HEK293 (cell line): ENCODE measurements at regions of chr5 and their contacts with region 1.

Region 1: GRCh38 chr5:169980418-169981053 is at the start of gene INSYN2B:
- H3K4me3 ChIP-seq: peak within 1 kb of the TSS; percentile 27
- H3K27ac ChIP-seq: no peak within 1 kb of the TSS
- H3K4me1 ChIP-seq: no peaks in the 10 kb centered on the region
- CTCF ChIP-seq: peak; percentile 81

Region 2: GRCh38 chr5:169842699-169843098 is 137.8 kb before region 1 on chr5:
- CTCF ChIA-PET with region 1: no interaction called
- POLR2A ChIA-PET with region 1: no interaction called
- H3K4me3 ChIP-seq: no peak overlapping the region
- H3K27ac ChIP-seq: no peak overlapping the region
- H3K4me1 ChIP-seq: no peaks in the 10 kb centered on the region
- CTCF ChIP-seq: no peak

Region 3: GRCh38 chr5:169945831-169946261 is 34.7 kb before region 1 on chr5:
- CTCF ChIA-PET with region 1: interaction called, 10 read pairs
- POLR2A ChIA-PET with region 1: no interaction called
- H3K4me3 ChIP-seq: no peak overlapping the region
- H3K27ac ChIP-seq: no peak overlapping the region
- H3K4me1 ChIP-seq: no peaks in the 10 kb centered on the region
- CTCF ChIP-seq: no peak

Region 4: DNA sequence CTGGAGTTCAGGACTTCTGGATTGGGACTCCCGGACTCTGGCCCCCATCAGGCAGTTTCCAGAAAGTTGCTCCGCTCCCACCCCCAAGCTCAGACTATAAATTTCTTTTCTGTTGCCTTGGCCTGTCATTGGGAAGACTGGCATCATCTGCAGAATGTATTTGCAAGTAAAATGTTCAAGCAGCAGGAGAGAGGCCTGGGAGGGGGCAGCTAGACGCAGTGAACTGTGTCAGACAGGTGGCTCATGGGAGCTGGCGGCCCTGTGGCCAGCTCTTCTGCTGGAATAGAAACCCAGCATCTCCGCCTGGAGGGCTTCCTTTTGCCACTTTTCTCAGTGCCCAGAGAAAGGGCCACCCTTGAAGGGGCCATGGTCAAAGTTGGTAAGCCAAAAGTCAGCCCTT is 16.3 kb before region 1 on chr5:
- CTCF ChIA-PET with region 1: interaction called, 59 read pairs
- POLR2A ChIA-PET with region 1: no interaction called
- H3K4me3 ChIP-seq: no peak overlapping the region
- H3K27ac ChIP-seq: no peak overlapping the region
- H3K4me1 ChIP-seq: no peaks in the 10 kb centered on the region
- CTCF ChIP-seq: no peak

Region 5: DNA sequence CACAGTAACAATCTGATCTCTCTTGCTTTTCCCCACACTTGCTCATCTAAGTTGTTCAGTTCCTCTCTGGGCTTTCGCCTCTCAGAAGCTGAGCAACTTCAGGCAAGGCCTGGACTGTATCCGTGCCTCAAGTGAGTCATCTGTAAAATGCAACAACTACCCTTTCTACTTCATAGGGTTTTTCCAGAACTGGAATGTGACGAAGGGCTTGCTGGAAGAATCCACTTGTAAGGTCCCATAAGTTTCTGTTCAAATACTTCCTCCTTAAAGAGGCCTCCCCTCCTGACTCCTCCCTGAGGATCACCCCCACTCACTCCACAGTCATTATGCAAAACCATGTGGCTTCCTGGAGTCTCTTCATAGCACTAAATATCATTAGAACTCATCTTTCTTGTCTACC is 17.3 kb after region 1 on chr5:
- CTCF ChIA-PET with region 1: interaction called, 12 read pairs
- POLR2A ChIA-PET with region 1: no interaction called
- H3K4me3 ChIP-seq: no peak overlapping the region
- H3K27ac ChIP-seq: no peak overlapping the region
- H3K4me1 ChIP-seq: no peaks in the 10 kb centered on the region
- CTCF ChIP-seq: no peak

Region 6: DNA sequence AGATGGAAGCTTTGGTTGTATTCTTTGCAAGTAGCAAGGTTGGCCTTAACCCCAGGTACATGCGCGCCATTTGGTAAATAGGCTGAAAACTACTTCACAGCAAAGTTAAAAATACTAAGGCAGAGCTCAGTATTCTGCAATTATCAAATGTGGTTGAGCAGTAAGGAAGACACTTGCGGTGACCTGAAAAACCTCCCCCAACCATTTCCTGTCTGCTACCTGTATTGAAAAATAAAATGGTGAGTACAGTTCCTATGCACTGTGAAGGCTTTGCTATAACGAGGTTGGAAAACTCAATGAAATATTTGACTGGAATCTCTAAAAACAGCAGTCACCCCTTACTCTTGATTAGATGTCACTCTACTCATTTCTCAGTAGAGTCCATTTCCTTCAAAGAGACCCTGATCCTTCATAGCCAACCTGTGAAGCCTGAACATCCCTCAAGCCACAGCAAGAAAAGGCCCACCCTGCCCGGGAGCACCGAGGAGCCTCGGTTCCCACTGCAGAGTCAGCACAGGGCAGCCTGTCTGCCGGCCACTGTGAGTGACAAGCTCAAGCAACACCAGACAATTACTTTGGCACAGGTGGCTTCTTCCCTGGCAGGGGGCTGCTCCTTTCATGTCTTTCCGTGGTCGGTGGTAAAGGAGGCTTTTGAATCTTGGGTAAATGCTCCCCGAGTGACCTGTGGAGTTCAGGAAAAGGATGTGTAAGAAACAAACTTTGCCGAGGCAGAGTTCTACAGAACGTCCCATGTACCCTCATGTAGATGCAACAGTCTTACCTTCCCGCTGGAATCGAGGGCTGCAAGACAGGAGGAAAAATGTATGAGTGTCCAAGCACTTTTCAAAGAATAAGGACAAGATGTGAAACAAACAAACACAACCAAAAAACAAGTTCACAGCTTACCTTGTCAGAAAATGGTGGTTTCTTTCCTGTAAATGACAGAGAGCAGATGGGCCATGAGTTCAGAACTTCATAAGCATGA is 281.8 kb after region 1 on chr5:
- CTCF ChIA-PET with region 1: no interaction called
- POLR2A ChIA-PET with region 1: no interaction called
- H3K4me3 ChIP-seq: no peak overlapping the region
- H3K27ac ChIP-seq: no peak overlapping the region
- H3K4me1 ChIP-seq: no peaks in the 10 kb centered on the region
- CTCF ChIP-seq: no peak